Kidney (tissue), 22 donors: ENCODE measurements at regions of chr4 and their contacts with region 1.

Region 1: DNA sequence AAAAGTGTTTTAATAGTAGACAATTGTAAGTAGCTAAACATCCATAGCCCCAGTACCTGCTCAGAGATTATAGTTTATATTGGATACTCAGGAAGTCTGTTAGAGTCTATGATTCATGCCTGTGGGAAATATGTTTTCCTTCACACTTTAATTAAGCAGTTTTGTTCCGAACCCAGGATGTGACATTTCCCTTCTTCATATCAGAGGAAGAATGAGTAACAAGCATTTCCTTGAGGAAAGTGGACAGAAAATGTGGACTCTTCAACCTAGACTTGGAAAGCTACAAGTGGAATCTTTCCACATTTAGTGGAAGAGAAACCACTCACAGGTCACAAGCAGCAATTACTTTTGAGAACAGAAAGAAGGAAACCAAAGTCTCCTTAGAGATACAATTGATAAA is 419.4 kb downstream of the C4orf33 start:
- DNase-seq: no peak
- H3K4me3 ChIP-seq: no peak overlapping the region
- H3K27ac ChIP-seq: no peak overlapping the region
- H3K4me1 ChIP-seq: no peaks in the 10 kb centered on the region
- H3K27me3 ChIP-seq: no peaks in the 10 kb centered on the region
- CTCF ChIP-seq: no peak

Region 2: DNA sequence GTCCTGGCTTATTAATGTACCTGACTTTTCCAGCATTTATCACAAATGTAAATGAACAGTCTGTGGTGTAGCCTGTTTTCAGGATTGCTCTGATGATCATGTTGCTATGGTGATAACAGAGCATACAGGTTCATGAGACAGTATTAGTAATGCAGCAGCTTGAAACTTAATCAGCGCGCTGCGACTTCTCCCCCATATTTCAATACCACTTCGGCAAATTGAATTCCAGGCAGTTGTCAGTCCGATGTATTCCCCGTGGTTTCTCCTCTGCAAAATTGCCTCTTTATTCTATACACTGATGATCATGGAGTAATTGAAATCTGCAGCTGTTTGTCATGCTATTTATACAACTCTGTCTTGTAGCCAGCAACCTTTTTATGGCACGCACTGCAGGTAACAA is 180.1 kb before region 1 on chr4:
- intact Hi-C with region 1: no loop called
- DNase-seq: peak in 3 of 5 donors; percentile 32 to 50 (median 43)
- H3K4me3 ChIP-seq: no peak overlapping the region
- H3K27ac ChIP-seq: no peak overlapping the region
- H3K4me1 ChIP-seq: no peaks in the 10 kb centered on the region
- H3K27me3 ChIP-seq: no peaks in the 10 kb centered on the region
- CTCF ChIP-seq: no peak

Region 3: GRCh38 chr4:129578336-129578735 is 63.0 kb after region 1 on chr4:
- intact Hi-C with region 1: loop called (anchors 5 kb)
- DNase-seq: no peak
- H3K4me3 ChIP-seq: no peak overlapping the region
- H3K27ac ChIP-seq: no peak overlapping the region
- H3K4me1 ChIP-seq: no peaks in the 10 kb centered on the region
- H3K27me3 ChIP-seq: no peaks in the 10 kb centered on the region
- CTCF ChIP-seq: no peak